ENCODE measurements at regions of chr3 and their contacts with region 1.

Region 1: DNA sequence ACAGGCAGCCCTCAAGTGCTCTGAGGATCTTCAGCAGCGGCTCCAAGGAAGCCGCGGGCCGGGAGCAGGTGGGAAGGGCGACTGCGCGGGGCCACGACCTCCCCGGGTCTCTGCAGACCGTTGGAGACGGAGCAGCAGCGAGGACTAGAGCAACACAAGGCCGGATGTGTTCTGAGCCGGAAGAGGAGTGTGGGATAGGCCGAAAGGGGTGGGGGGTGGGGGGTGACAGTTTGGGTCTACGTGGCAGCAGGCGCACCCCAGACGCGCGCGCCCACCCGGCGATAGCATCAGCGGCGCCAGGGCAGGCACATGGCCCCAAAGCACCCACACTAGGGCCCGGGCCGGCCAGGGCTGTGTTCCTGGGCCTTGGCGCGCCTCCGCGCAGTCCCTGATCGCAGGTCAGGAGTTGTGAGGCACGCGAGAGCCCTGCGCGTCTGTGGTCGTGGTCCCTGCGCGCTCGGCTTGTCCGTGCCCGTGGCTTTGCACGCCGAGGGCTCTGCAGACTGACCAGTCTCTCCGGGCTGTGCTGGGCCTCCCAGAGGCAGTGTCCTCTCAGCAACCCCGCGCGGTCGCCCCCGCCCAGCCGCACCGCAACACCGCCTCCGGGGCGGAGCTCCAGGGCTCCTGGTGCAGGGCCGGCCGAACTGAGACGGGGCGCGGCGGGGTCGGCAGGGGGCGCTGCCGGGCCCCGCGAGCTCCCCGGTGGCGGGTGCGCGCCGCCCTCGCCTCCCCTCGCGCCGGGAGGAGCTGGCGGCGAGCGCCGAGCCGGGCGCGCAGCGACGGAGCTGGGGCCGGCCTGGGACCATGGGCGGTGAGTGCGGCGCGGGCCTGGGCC is at the start of gene PXYLP1:
- DNase-seq: peak; percentile 94 to 98 (median 95)
- ATAC-seq: peak; percentile 94 to 97 (median 96)
- H3K4me3 ChIP-seq: peak within 1 kb of the TSS; percentile 71 to 95 (median 87)
- H3K27ac ChIP-seq: peak within 1 kb of the TSS; percentile 45 to 96 (median 90)
- H3K4me1 ChIP-seq: peaks cover 0 to 40% (median 14%) of the 10 kb centered on the region in 12 donors
- H3K27me3 ChIP-seq: no peaks in the 10 kb centered on the region
- CTCF ChIP-seq: peak; percentile 43 to 94 (median 78)
- POLR2A ChIP-seq: peak in 1 of 2 donors; percentile 81
- total RNA-seq, gene PXYLP1: 15.1 to 30.6 (median 21.2) TPM

Region 2: GRCh38 chr3:141271279-141272030 is 40.1 kb after region 1 on chr3:
- intact Hi-C with region 1: loop called in 5 of 10 experiments (anchors 2 to 5 kb)
- DNase-seq: no peak
- ATAC-seq: no peak
- H3K4me3 ChIP-seq: no peak overlapping the region
- H3K27ac ChIP-seq: no peak overlapping the region
- H3K4me1 ChIP-seq: peaks cover 0 to 23% (median 6%) of the 10 kb centered on the region in 12 donors
- H3K27me3 ChIP-seq: no peaks in the 10 kb centered on the region
- CTCF ChIP-seq: no peak
- POLR2A ChIP-seq: no peak

Region 3: GRCh38 chr3:141279077-141279967 is 48.0 kb after region 1 on chr3:
- intact Hi-C with region 1: loop called (anchors 1 to 5 kb)
- DNase-seq: no peak
- ATAC-seq: peak; percentile 49 to 62 (median 58)
- H3K4me3 ChIP-seq: no peak overlapping the region
- H3K27ac ChIP-seq: peak overlapping the region in 8 of 12 donors; percentile 15 to 75 (median 41)
- H3K4me1 ChIP-seq: peaks cover 0 to 37% (median 20%) of the 10 kb centered on the region in 12 donors
- H3K27me3 ChIP-seq: no peaks in the 10 kb centered on the region
- CTCF ChIP-seq: peak; percentile 46 to 70 (median 60)
- POLR2A ChIP-seq: no peak